Activated CD4-positive, alpha-beta memory T cell treated with anti-CD3 and anti-CD28 coated beads, Interleukin-2, amount 10 ng/mL, durations not matched to agents 7 days and 5 days (primary cell): ENCODE measurements at regions of chr6 and their contacts with region 1.

Region 1: GRCh38 chr6:35203680-35204079 is 10.1 kb upstream of the SCUBE3 start:
- DNase-seq: no peak
- H3K4me3 Mint-ChIP-seq: no peak overlapping the region
- H3K27ac Mint-ChIP-seq: no peak overlapping the region
- H3K4me1 Mint-ChIP-seq: no peaks in the 10 kb centered on the region
- H3K27me3 Mint-ChIP-seq: peaks cover 55% of the 10 kb centered on the region

Region 2: GRCh38 chr6:34986845-34987246 is 216.8 kb before region 1 on chr6:
- CTCF ChIA-PET with region 1: interaction called, 54 read pairs
- POLR2A ChIA-PET with region 1: no interaction called
- DNase-seq: peak; percentile 71
- H3K4me3 Mint-ChIP-seq: no peak overlapping the region
- H3K27ac Mint-ChIP-seq: no peak overlapping the region
- H3K4me1 Mint-ChIP-seq: no peaks in the 10 kb centered on the region
- H3K27me3 Mint-ChIP-seq: no peaks in the 10 kb centered on the region

Region 3: GRCh38 chr6:35139908-35140655 is 63.6 kb before region 1 on chr6:
- CTCF ChIA-PET with region 1: interaction called, 76 read pairs
- POLR2A ChIA-PET with region 1: no interaction called
- DNase-seq: peak; percentile 57
- H3K4me3 Mint-ChIP-seq: no peak overlapping the region
- H3K27ac Mint-ChIP-seq: no peak overlapping the region
- H3K4me1 Mint-ChIP-seq: peaks cover 23% of the 10 kb centered on the region
- H3K27me3 Mint-ChIP-seq: peaks cover 22% of the 10 kb centered on the region

Region 4: GRCh38 chr6:35146453-35146852 is 57.2 kb before region 1 on chr6:
- CTCF ChIA-PET with region 1: interaction called, 76 read pairs
- POLR2A ChIA-PET with region 1: interaction called, 3 read pairs
- DNase-seq: peak; percentile 48
- H3K4me3 Mint-ChIP-seq: no peak overlapping the region
- H3K27ac Mint-ChIP-seq: no peak overlapping the region
- H3K4me1 Mint-ChIP-seq: peaks cover 42% of the 10 kb centered on the region
- H3K27me3 Mint-ChIP-seq: peaks cover 7% of the 10 kb centered on the region

Region 5: DNA sequence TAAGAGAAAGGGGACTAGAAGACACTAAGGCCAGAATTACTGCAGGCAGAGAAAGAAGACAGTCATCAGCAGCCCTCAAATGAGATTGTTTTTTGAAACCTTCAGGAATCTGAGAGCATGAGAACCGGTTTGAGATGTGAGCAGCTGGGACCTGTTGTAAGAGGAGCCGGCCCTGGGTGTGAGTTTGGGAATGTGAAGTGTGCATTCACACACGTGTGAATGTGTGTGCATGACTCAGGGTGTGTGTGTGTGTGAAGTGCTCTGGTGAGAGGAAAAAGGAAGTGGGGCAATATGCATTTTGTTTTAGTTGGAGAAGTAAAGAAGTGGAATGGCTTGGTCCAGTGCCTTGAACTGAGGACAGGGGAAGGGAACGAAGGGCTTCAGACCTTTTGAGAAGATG is 14.3 kb after region 1 on chr6:
- CTCF ChIA-PET with region 1: interaction called, 10 read pairs
- POLR2A ChIA-PET with region 1: interaction called, 4 read pairs
- DNase-seq: no peak
- H3K4me3 Mint-ChIP-seq: no peak overlapping the region
- H3K27ac Mint-ChIP-seq: no peak overlapping the region
- H3K4me1 Mint-ChIP-seq: peaks cover 4% of the 10 kb centered on the region
- H3K27me3 Mint-ChIP-seq: peaks cover 55% of the 10 kb centered on the region

Region 6: GRCh38 chr6:35264550-35265274 is 61.0 kb after region 1 on chr6:
- CTCF ChIA-PET with region 1: no interaction called
- POLR2A ChIA-PET with region 1: no interaction called
- DNase-seq: no peak
- H3K4me3 Mint-ChIP-seq: no peak overlapping the region
- H3K27ac Mint-ChIP-seq: no peak overlapping the region
- H3K4me1 Mint-ChIP-seq: peaks cover 37% of the 10 kb centered on the region
- H3K27me3 Mint-ChIP-seq: no peaks in the 10 kb centered on the region

Region 7: DNA sequence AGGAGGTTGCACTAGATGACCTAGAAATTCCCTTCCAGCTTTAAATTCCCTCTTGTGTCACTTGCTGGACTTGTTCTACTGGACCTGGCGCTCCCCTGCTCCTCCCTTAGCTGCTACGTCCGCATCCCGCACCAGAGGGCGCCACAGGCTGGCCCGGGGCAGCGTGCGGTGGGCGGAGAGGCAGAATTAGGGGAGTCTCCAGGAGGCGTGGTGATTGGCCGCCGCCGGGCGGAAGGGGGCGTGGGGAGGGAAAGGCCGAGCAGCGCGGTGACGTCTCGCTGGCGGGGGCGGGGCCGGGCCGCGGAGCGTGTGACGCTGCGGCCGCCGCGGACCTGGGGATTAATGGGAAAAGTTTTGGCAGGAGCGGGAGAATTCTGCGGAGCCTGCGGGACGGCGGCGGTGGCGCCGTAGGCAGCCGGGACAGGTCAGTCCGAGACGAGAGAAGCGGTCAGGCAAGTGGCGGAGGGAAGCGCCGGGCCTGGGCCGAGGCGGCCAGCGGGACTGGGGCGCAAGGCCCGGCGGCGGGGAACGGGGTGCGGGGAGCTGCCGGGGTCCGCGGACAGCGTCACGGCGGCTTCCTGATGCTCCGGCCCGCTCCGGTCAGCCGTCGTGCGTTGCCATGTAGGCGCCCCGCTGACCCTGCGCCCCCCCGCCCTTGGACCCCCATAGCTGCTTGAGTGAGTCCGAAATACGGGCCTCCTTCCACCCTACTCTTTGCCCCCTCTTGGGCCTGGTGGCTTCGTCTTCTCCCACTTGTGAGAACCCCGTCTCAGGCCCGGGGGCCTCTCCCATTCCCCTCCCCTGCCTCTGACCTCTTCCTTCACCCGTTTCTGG is 138.8 kb after region 1 on chr6 and contains the start of gene PPARD:
- CTCF ChIA-PET with region 1: no interaction called
- POLR2A ChIA-PET with region 1: no interaction called
- DNase-seq: peak; percentile 98
- H3K4me3 Mint-ChIP-seq: peak within 1 kb of the TSS; percentile 96
- H3K27ac Mint-ChIP-seq: peak within 1 kb of the TSS; percentile 79
- H3K4me1 Mint-ChIP-seq: peaks cover 45% of the 10 kb centered on the region
- H3K27me3 Mint-ChIP-seq: peaks cover 7% of the 10 kb centered on the region
- total RNA-seq, gene PPARD: 23.1 to 23.4 TPM